CD8-positive, alpha-beta T cell (primary cell): ENCODE measurements at regions of chr1 and their contacts with region 1.

Region 1: DNA sequence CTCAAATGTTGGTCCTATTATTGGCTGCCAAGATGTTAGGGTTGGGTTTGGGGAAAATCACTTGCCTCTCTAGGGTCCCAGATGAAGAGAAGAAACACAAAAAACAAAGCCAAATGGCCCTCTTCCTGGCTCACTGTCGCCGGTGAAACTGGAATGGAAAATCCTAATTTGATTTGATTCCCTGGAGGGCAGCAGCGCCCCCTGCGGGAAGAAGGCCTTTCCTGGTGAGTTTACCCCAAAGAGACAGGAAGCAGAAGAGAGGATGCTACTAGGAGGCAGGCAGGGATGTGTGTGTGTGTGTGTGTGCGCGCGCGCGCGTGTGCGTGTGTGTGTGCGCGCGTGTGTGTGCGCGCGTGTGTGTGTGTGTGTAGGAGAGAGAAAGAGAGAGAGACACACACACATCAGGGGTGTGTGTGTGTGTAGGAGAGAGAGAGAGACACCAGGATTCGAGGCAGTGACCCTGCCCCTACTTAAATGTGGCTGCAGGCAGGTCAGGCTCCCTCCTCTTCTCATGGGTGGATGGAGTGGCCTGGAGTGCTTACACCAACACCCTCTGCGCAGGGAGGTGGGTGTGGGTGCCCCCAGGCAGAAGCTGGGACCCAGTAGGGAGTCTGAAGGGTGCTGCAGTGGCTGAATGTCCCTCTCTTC is 3.1 kb upstream of the SELENON start:
- DNase-seq: peak; percentile 64 to 89 (median 86)
- ATAC-seq: peak; percentile 48
- H3K4me3 ChIP-seq: peak overlapping the region in 1 of 2 experiments; percentile 12
- H3K4me3 Mint-ChIP-seq: peak overlapping the region; percentile 75
- H3K27ac ChIP-seq: peak overlapping the region; percentile 33 to 62
- H3K27ac Mint-ChIP-seq: peak overlapping the region; percentile 97
- H3K4me1 ChIP-seq: peaks cover 52% of the 10 kb centered on the region
- H3K4me1 Mint-ChIP-seq: peaks cover 70% of the 10 kb centered on the region
- H3K27me3 ChIP-seq: no peaks in the 10 kb centered on the region
- H3K27me3 Mint-ChIP-seq: no peaks in the 10 kb centered on the region
- CTCF ChIP-seq: peak; percentile 62

Region 2: GRCh38 chr1:25608488-25609178 is 188.3 kb before region 1 on chr1:
- CTCF ChIA-PET with region 1: interaction called, 68 read pairs
- POLR2A ChIA-PET with region 1: interaction called, 8 read pairs
- intact Hi-C with region 1: loop called in 1 of 2 experiments (anchors 1 kb)
- DNase-seq: peak; percentile 63 to 93 (median 90)
- ATAC-seq: peak; percentile 99
- H3K4me3 ChIP-seq: no peak overlapping the region
- H3K4me3 Mint-ChIP-seq: no peak overlapping the region
- H3K27ac ChIP-seq: no peak overlapping the region
- H3K27ac Mint-ChIP-seq: no peak overlapping the region
- H3K4me1 ChIP-seq: peaks cover 3% of the 10 kb centered on the region
- H3K4me1 Mint-ChIP-seq: peaks cover 12% of the 10 kb centered on the region
- H3K27me3 ChIP-seq: no peaks in the 10 kb centered on the region
- H3K27me3 Mint-ChIP-seq: no peaks in the 10 kb centered on the region
- CTCF ChIP-seq: no peak

Region 3: GRCh38 chr1:25631750-25632485 is 165.0 kb before region 1 on chr1:
- CTCF ChIA-PET with region 1: no interaction called
- POLR2A ChIA-PET with region 1: no interaction called
- intact Hi-C with region 1: no loop called
- DNase-seq: peak in 2 of 9 experiments; percentile 30 to 47
- ATAC-seq: peak; percentile 45
- H3K4me3 ChIP-seq: peak overlapping the region; percentile 28 to 31
- H3K4me3 Mint-ChIP-seq: peak overlapping the region; percentile 86
- H3K27ac ChIP-seq: peak overlapping the region; percentile 44 to 48
- H3K27ac Mint-ChIP-seq: peak overlapping the region; percentile 95
- H3K4me1 ChIP-seq: peaks cover 49% of the 10 kb centered on the region
- H3K4me1 Mint-ChIP-seq: peaks cover 66% of the 10 kb centered on the region
- H3K27me3 ChIP-seq: no peaks in the 10 kb centered on the region
- H3K27me3 Mint-ChIP-seq: no peaks in the 10 kb centered on the region
- CTCF ChIP-seq: no peak

Region 4: DNA sequence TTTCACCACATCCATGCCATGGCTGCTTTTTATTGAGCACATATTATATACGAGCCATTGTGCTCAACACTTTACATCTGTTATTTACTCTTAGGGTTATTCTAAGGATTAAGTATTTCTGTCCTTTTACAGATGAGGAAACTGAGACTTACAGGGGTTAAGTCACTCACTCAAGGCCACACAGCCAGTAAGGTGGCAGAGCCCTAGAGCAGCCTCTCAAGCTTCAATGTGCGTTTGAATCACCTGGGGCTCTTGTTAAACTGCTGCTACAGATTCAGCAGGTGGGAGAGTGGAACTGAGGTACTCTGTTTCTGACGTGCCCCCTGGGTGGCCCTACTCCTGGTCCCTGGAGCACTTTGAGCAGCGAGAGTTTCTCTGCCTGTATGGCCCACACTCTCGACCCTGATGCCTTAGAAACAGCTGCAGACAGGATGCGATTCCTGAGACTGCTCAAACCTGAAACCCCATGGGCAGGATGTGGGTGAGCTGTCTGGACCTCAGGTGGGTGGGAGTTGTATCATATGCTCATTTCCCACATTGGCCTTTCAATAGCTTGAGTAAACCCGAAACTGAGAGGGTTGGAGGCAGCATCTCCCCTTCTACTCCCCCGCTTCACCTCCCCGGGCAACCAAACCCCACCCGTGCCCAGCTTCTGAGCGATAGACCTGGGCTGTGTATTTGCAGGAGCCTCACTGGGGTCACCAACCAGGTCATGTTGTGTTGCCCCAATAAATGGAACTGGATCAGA is 121.0 kb before region 1 on chr1:
- CTCF ChIA-PET with region 1: interaction called, 6 read pairs
- POLR2A ChIA-PET with region 1: interaction called, 4 read pairs
- intact Hi-C with region 1: loop called in 1 of 2 experiments (anchors 1 kb)
- DNase-seq: peak; percentile 36 to 90 (median 74)
- ATAC-seq: peak; percentile 80
- H3K4me3 ChIP-seq: peak overlapping the region; percentile 14 to 41
- H3K4me3 Mint-ChIP-seq: peak overlapping the region; percentile 80
- H3K27ac ChIP-seq: peak overlapping the region; percentile 38 to 45
- H3K27ac Mint-ChIP-seq: peak overlapping the region; percentile 94
- H3K4me1 ChIP-seq: peaks cover 71% of the 10 kb centered on the region
- H3K4me1 Mint-ChIP-seq: peaks cover 88% of the 10 kb centered on the region
- H3K27me3 ChIP-seq: no peaks in the 10 kb centered on the region
- H3K27me3 Mint-ChIP-seq: no peaks in the 10 kb centered on the region
- CTCF ChIP-seq: no peak

Region 5: DNA sequence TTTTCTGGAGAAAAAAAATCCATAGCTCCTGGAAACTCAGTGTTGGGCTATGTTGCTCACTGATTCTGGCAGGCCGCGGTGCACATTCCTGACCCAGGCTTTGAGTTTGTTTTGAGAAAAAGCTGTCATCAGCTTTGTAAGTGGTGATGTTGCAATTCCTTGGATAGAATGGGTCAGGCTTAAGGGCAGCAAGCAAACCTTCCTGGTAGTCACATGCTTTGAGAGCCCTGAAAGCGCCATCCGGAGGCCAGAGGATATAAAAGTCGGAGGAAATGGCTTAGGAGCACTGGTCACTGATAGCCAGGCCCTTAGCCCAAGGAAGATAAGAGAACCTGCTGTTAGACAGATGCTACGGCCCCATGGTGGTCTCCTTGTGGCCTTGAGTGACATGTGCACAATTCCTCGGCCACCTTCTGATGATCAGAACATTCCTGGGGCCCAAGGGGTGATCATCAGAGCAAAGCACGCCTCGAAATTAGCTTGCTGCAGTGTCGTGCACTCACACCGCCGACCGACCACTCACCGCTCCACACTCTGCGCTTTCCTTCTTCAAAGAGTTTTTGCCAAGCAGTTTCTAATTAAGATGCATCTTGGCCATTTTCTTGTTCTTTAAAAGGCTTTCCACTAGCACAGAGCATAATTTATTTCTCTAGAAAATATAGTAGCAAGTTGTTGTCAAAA is 101.7 kb before region 1 on chr1:
- CTCF ChIA-PET with region 1: interaction called, 4 read pairs
- POLR2A ChIA-PET with region 1: interaction called, 4 read pairs
- intact Hi-C with region 1: loop called (anchors 5 kb)
- DNase-seq: no peak
- ATAC-seq: no peak
- H3K4me3 ChIP-seq: no peak overlapping the region
- H3K4me3 Mint-ChIP-seq: no peak overlapping the region
- H3K27ac ChIP-seq: no peak overlapping the region
- H3K27ac Mint-ChIP-seq: peak overlapping the region; percentile 58
- H3K4me1 ChIP-seq: peaks cover 44% of the 10 kb centered on the region
- H3K4me1 Mint-ChIP-seq: peaks cover 59% of the 10 kb centered on the region
- H3K27me3 ChIP-seq: no peaks in the 10 kb centered on the region
- H3K27me3 Mint-ChIP-seq: no peaks in the 10 kb centered on the region
- CTCF ChIP-seq: no peak

Region 6: DNA sequence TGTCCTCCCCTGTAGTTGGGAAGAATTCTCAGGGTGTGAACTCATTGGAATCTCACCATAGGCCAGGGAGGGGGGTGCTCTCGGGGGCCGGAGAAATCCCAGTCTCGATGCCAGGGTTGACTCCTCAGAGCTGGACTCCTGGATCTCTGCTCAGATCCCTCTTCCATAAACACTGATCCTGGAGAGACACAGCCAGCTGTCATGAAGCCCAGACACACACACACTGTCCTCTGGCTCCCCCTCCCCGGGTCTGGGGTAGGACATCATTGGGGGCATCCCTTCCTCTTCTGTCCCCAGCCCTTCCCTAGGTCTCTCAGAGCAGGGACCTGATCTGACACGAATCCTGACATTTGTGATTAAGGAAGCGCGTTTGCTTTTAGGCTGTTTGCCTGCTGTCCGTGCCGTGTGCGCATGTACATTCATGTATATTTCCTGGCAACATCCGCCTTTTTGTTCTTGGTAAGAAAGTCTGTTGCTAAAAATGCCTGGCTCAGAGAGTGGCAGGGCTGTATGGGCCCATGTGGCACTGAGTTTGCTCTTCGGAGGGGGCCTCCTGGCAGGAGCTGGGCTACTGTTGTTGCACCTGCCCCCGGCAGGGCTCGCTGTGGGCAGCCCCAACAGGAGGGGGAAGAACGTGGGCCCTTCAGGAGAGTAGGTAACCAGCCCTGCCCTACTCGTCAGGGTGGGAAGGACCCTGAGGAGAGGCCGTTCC is 42.3 kb before region 1 on chr1:
- CTCF ChIA-PET with region 1: interaction called, 7 read pairs
- POLR2A ChIA-PET with region 1: no interaction called
- intact Hi-C with region 1: loop called (anchors 1 kb)
- DNase-seq: peak in 6 of 9 experiments; percentile 33 to 74 (median 54)
- ATAC-seq: peak; percentile 95
- H3K4me3 ChIP-seq: no peak overlapping the region
- H3K4me3 Mint-ChIP-seq: peak overlapping the region; percentile 56
- H3K27ac ChIP-seq: peak overlapping the region; percentile 14 to 19
- H3K27ac Mint-ChIP-seq: peak overlapping the region; percentile 95
- H3K4me1 ChIP-seq: peaks cover 36% of the 10 kb centered on the region
- H3K4me1 Mint-ChIP-seq: peaks cover 48% of the 10 kb centered on the region
- H3K27me3 ChIP-seq: no peaks in the 10 kb centered on the region
- H3K27me3 Mint-ChIP-seq: no peaks in the 10 kb centered on the region
- CTCF ChIP-seq: peak; percentile 29

Region 7: GRCh38 chr1:26066857-26067256 is 269.9 kb after region 1 on chr1:
- CTCF ChIA-PET with region 1: no interaction called
- POLR2A ChIA-PET with region 1: no interaction called
- intact Hi-C with region 1: no loop called
- DNase-seq: no peak
- ATAC-seq: no peak
- H3K4me3 ChIP-seq: no peak overlapping the region
- H3K4me3 Mint-ChIP-seq: no peak overlapping the region
- H3K27ac ChIP-seq: no peak overlapping the region
- H3K27ac Mint-ChIP-seq: no peak overlapping the region
- H3K4me1 ChIP-seq: no peaks in the 10 kb centered on the region
- H3K4me1 Mint-ChIP-seq: no peaks in the 10 kb centered on the region
- H3K27me3 ChIP-seq: no peaks in the 10 kb centered on the region
- H3K27me3 Mint-ChIP-seq: peaks cover 6% of the 10 kb centered on the region
- CTCF ChIP-seq: no peak